IMR-90 (cell line): ENCODE measurements at regions of chr2 and their contacts with region 1.

Region 1: GRCh38 chr2:191521608-191522208 is 156.2 kb upstream of the NABP1 start:
- DNase-seq: peak; percentile 55
- ATAC-seq: peak; percentile 68; the same call in 1 of the 2 replicates
- H3K4me3 ChIP-seq: no peak overlapping the region
- H3K27ac ChIP-seq: no peak overlapping the region
- H3K4me1 ChIP-seq: no peaks in the 10 kb centered on the region
- H3K27me3 ChIP-seq: no peaks in the 10 kb centered on the region; the same call in 1 of the 2 replicates
- CTCF ChIP-seq: peak; percentile 90
- POLR2A ChIP-seq: 0 out of 2 replicates have a peak, but pooled peaks have one; percentile 40
- RAD21 ChIP-seq: peak; percentile 83

Region 2: GRCh38 chr2:191218292-191218898 is 303.3 kb before region 1 on chr2:
- CTCF ChIA-PET with region 1: no interaction called
- POLR2A ChIA-PET with region 1: no interaction called
- dilution Hi-C with region 1: no loop called
- in situ Hi-C with region 1: no loop called
- intact Hi-C with region 1: loop called (anchors 1 kb)
- DNase-seq: peak; percentile 92
- ATAC-seq: peak; percentile 86
- H3K4me3 ChIP-seq: no peak overlapping the region
- H3K27ac ChIP-seq: peak overlapping the region; percentile 59; the same call in 1 of the 2 replicates
- H3K4me1 ChIP-seq: peaks cover 8% of the 10 kb centered on the region; the same call in 1 of the 2 replicates
- H3K27me3 ChIP-seq: no peaks in the 10 kb centered on the region
- CTCF ChIP-seq: peak; percentile 82
- POLR2A ChIP-seq: no peak
- RAD21 ChIP-seq: peak; percentile 83

Region 3: DNA sequence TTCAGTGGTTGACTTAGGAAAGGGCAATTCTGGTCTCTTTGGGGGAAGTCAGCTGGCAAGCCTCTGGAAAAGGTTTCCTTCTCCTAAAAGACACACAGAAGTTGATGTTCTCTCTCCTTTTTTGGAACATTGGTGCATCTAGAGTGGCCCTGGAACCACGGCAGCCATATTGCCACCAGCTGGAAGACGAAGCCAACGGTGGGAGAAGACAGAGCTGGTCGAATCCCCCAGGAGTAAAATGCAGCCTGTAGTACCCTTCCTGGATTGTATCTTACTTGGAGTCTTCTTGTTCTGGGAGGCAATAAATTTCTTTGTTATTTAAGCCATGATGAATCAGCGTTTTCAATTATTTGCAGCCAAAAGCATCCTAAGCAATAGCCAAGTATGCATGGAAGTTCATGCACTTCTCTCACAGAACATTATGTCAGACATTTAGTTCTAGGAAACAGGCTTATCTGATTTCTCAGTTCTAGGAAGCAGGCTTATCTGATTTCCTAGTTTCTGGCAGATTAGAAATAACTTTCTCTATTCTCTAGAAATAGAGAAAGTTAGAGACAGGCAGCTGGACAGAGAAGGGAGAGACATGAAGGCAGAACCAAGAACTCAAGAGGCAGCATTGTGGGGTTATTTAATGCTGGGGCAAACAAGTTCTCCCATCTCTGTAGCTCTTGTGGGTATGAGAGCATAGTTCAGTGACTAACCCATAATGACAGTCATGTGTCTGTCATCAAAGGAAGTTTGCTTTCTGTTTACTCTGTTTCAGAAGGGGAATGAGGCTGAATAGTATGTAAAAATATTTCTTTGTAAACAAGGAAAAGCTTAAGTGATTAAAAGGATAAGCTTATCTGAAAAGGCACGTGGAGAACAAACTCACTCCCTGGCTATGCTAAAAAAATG is 115.7 kb after region 1 on chr2:
- CTCF ChIA-PET with region 1: no interaction called
- POLR2A ChIA-PET with region 1: interaction called, 12 read pairs
- dilution Hi-C with region 1: no loop called
- in situ Hi-C with region 1: no loop called
- intact Hi-C with region 1: no loop called
- DNase-seq: peak; percentile 71
- ATAC-seq: peak; percentile 18
- H3K4me3 ChIP-seq: no peak overlapping the region
- H3K27ac ChIP-seq: peak overlapping the region; percentile 100
- H3K4me1 ChIP-seq: peaks cover 21% of the 10 kb centered on the region
- H3K27me3 ChIP-seq: no peaks in the 10 kb centered on the region
- CTCF ChIP-seq: no peak
- POLR2A ChIP-seq: no peak
- RAD21 ChIP-seq: no peak